Activated T-helper 1 cell treated with anti-CD3 and anti-CD28 coated beads, Interleukin-12 subunit alpha, Interleukin-12 subunit beta, Interleukin-2, Interleukin-4 antibody, amounts not matched to agents 30 ng/mL and 10 ng/mL and 1 ng/mL, durations not matched to agents 14 hours and 24 hours and 36 hours (primary cell): ENCODE measurements at regions of chr2 and their contacts with region 1.

Region 1: DNA sequence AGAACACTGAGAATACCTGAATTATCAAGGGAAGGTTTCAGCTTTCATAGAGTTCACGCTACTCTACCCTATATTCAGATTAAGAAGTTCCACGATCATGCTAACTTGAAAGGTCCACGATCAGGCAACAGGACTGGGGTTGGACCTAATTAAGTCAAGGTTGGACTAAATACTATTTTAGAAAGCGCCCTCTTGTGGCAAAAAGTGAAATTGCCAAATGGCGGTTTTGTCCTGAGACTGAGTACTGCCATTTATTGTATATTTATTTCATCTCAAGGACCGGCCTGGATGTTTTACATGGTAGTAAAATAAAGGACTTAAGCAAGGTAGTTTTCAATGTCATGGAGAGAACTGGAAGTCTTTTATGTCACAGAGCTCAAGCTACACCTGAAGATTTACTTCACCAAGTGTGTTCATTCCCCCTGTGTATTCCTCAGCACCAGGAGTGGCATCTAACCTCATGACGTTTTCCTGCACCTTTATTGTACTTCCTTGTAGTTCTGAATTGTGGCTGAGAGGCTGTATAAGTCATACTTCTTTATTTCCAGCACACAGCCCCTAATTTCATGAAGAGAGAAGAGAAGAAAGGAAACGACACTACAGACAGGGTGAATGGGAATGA is 56.8 kb downstream of the SRD5A2 start:
- DNase-seq: peak; percentile 17
- H3K4me3 Mint-ChIP-seq: no peak overlapping the region
- H3K27ac Mint-ChIP-seq: no peak overlapping the region
- H3K4me1 Mint-ChIP-seq: no peaks in the 10 kb centered on the region
- H3K27me3 Mint-ChIP-seq: peaks cover 6% of the 10 kb centered on the region

Region 2: DNA sequence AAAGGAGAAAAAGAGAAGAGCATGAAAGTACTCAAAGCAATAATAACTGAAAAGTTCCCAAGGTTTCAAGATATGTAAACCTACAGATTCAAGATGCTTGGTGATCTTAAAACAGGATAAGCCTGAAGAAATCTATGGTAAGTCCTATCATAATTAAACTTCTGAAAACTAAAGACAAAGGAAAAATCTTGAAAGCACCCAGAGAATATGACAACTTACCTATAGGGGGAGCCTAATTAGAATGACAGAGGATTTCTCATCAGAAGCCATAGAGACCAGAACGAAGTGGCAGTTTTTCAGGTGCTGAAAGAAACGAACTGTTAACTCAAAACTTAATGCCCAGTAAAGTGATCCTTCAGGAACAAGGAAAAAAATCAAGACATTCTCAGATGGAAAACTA is 169.1 kb before region 1 on chr2:
- intact Hi-C with region 1: loop called (anchors 10 kb)
- DNase-seq: no peak
- H3K4me3 Mint-ChIP-seq: no peak overlapping the region
- H3K27ac Mint-ChIP-seq: no peak overlapping the region
- H3K4me1 Mint-ChIP-seq: no peaks in the 10 kb centered on the region
- H3K27me3 Mint-ChIP-seq: peaks cover 43% of the 10 kb centered on the region

Region 3: GRCh38 chr2:31384351-31384750 is 139.6 kb before region 1 on chr2:
- intact Hi-C with region 1: no loop called
- DNase-seq: no peak
- H3K4me3 Mint-ChIP-seq: no peak overlapping the region
- H3K27ac Mint-ChIP-seq: no peak overlapping the region
- H3K4me1 Mint-ChIP-seq: peaks cover 36% of the 10 kb centered on the region
- H3K27me3 Mint-ChIP-seq: no peaks in the 10 kb centered on the region